T-cell (primary cell): ENCODE measurements at regions of chrX and their contacts with region 1.

Region 1: GRCh38 chrX:75115707-75116413 is 40.2 kb downstream of the ABCB7 start:
- DNase-seq: no peak
- ATAC-seq: no peak
- H3K4me3 ChIP-seq: no peak overlapping the region
- H3K4me3 Mint-ChIP-seq: no peak overlapping the region
- H3K27ac ChIP-seq: no peak overlapping the region
- H3K27ac Mint-ChIP-seq: no peak overlapping the region
- H3K4me1 ChIP-seq: no peaks in the 10 kb centered on the region
- H3K4me1 Mint-ChIP-seq: peaks cover 1 to 6% (median 6%) of the 10 kb centered on the region in 3 donors
- H3K27me3 ChIP-seq: no peaks in the 10 kb centered on the region
- H3K27me3 Mint-ChIP-seq: peaks cover 0 to 7% of the 10 kb centered on the region in 2 donors

Region 2: GRCh38 chrX:73877687-73878086 is 1238.2 kb before region 1 on chrX:
- CTCF ChIA-PET with region 1: no interaction called
- POLR2A ChIA-PET with region 1: interaction called in 1 of 2 experiments, 14 read pairs
- DNase-seq: no peak
- ATAC-seq: no peak
- H3K4me3 ChIP-seq: no peak overlapping the region
- H3K4me3 Mint-ChIP-seq: no peak overlapping the region
- H3K27ac ChIP-seq: no peak overlapping the region
- H3K27ac Mint-ChIP-seq: no peak overlapping the region
- H3K4me1 ChIP-seq: no peaks in the 10 kb centered on the region
- H3K4me1 Mint-ChIP-seq: no peaks in the 10 kb centered on the region
- H3K27me3 ChIP-seq: peaks cover 0 to 3% of the 10 kb centered on the region in 2 experiments
- H3K27me3 Mint-ChIP-seq: peaks cover 3 to 23% of the 10 kb centered on the region in 2 donors

Region 3: GRCh38 chrX:74814681-74815080 is 301.2 kb before region 1 on chrX:
- CTCF ChIA-PET with region 1: no interaction called
- POLR2A ChIA-PET with region 1: no interaction called
- DNase-seq: no peak
- ATAC-seq: no peak
- H3K4me3 ChIP-seq: no peak overlapping the region
- H3K4me3 Mint-ChIP-seq: no peak overlapping the region
- H3K27ac ChIP-seq: no peak overlapping the region
- H3K27ac Mint-ChIP-seq: no peak overlapping the region
- H3K4me1 ChIP-seq: no peaks in the 10 kb centered on the region
- H3K4me1 Mint-ChIP-seq: no peaks in the 10 kb centered on the region
- H3K27me3 ChIP-seq: no peaks in the 10 kb centered on the region
- H3K27me3 Mint-ChIP-seq: peaks cover 3 to 19% of the 10 kb centered on the region in 2 donors

Region 4: GRCh38 chrX:75067931-75068330 is 47.9 kb before region 1 on chrX:
- CTCF ChIA-PET with region 1: no interaction called
- POLR2A ChIA-PET with region 1: no interaction called
- DNase-seq: no peak
- ATAC-seq: no peak
- H3K4me3 ChIP-seq: no peak overlapping the region
- H3K4me3 Mint-ChIP-seq: no peak overlapping the region
- H3K27ac ChIP-seq: no peak overlapping the region
- H3K27ac Mint-ChIP-seq: no peak overlapping the region
- H3K4me1 ChIP-seq: no peaks in the 10 kb centered on the region
- H3K4me1 Mint-ChIP-seq: no peaks in the 10 kb centered on the region
- H3K27me3 ChIP-seq: no peaks in the 10 kb centered on the region
- H3K27me3 Mint-ChIP-seq: peaks cover 0 to 8% of the 10 kb centered on the region in 2 donors